Vagina (tissue), 2 donors: ENCODE measurements at regions of chr17 and their contacts with region 1.

Region 1: GRCh38 chr17:27455914-27456680 is at the start of gene KSR1:
- DNase-seq: no peak
- H3K4me3 ChIP-seq: peak within 1 kb of the TSS; percentile 74 to 84
- H3K27ac ChIP-seq: peak within 1 kb of the TSS; percentile 88
- H3K4me1 ChIP-seq: peaks cover 53% of the 10 kb centered on the region
- H3K27me3 ChIP-seq: no peaks in the 10 kb centered on the region
- CTCF ChIP-seq: peak in 2 of 3 experiments; percentile 18 to 20
- POLR2A ChIP-seq: peak in 1 of 2 donors; percentile 89
- total RNA-seq, gene KSR1: 40.3 TPM

Region 2: DNA sequence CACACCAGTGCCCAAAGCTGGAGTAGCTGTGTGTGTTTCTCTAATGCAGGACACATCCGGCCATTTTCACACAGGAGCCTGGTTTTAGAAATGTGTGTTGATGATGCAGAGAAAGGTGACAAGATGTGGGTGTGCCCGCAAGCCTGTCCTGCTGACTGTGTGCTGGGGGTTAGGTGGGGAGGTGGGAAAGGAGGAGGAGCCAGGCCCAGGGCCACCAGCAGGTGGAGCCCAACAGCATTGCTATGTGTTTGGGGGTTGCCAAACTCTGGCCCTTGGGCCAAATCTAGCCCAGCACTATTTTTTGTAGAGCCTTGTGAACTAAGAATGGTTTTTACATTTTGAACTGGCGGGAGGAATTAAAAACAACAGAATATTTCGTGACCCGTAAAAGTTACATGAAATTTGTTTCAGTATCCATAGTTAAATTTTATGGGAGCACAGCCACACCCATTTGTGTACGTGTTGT is 113.2 kb after region 1 on chr17:
- intact Hi-C with region 1: loop called (anchors 10 kb)
- DNase-seq: no peak
- H3K4me3 ChIP-seq: no peak overlapping the region
- H3K27ac ChIP-seq: peak overlapping the region; percentile 15
- H3K4me1 ChIP-seq: peaks cover 52% of the 10 kb centered on the region
- H3K27me3 ChIP-seq: no peaks in the 10 kb centered on the region
- CTCF ChIP-seq: no peak
- POLR2A ChIP-seq: no peak